ENCODE measurements at regions of chr10 and their contacts with region 1.

Region 1: DNA sequence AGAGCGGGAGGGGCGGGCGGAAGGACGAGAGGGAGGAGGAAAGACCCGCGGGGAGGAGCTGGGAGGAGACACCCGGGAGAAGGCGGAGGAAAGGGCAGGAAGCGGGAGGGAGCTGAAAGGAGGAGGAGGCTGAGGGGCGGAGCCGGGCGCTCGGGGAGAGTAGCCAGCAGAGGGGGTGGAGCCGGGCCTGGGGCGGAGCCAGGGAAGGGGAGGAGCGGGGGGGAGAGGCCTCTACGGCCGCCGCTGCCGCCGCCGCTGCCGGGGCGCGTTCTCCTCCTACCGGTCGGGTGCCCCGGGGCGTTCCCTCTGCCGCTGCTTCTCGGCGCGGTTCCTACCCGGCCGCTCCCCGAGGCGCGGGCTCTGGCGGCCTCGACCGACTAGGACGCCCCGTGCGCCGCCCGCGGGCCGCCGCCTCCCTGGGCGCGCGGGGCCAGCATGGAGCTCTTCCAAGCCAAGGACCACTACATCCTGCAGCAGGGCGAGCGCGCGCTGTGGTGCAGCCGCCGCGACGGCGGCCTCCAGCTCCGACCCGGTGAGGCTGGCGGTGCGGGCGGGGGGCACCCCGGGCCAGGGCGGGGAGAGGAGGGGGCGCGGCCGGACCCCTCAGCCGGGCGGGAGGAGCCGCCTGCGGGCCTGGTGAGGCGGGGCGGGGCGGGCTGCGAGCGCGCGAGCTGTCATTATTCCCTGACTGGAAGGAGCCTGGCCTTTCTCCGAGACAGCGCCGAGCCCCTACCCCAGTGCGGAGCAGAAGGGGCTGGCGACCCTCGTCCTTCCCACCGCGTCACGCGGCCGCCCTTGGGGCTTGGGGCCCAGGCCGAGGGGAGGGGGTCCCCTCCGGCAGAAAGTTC is at the start of gene INPP5F:
- DNase-seq: peak; percentile 99
- ATAC-seq: peak; percentile 93
- H3K4me3 Mint-ChIP-seq: peak within 1 kb of the TSS; percentile 83
- H3K27ac Mint-ChIP-seq: peak within 1 kb of the TSS; percentile 66
- H3K4me1 Mint-ChIP-seq: peaks cover 40% of the 10 kb centered on the region
- H3K27me3 Mint-ChIP-seq: no peaks in the 10 kb centered on the region
- total RNA-seq, gene INPP5F: 17.4 to 32.0 TPM

Region 2: DNA sequence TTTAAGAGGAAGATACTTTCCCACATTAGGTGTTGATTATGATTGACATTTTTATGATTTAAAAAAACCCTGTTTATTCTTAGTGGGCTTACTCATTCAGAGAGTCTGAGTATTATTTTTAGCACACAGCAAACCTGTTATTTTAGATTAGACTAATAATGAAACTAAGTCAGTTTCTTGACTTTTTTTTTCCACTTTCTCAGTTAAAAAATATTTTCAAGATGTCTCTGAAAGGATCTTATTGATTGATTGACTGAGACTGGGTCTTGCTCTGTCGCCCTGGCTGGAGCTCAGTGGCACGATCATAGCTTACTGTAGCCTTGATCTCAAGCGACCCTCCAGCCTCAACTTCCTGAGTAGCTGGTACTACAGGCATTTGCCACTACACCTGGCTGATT is 20.6 kb before region 1 on chr10:
- CTCF ChIA-PET with region 1: interaction called, 24 read pairs
- DNase-seq: no peak
- ATAC-seq: peak; percentile 63
- H3K4me3 Mint-ChIP-seq: peak overlapping the region; percentile 62
- H3K27ac Mint-ChIP-seq: peak overlapping the region; percentile 95
- H3K4me1 Mint-ChIP-seq: peaks cover 66% of the 10 kb centered on the region
- H3K27me3 Mint-ChIP-seq: no peaks in the 10 kb centered on the region

Region 3: GRCh38 chr10:119715628-119716505 is 10.2 kb before region 1 on chr10:
- CTCF ChIA-PET with region 1: interaction called, 14 read pairs
- DNase-seq: no peak
- ATAC-seq: no peak
- H3K4me3 Mint-ChIP-seq: no peak overlapping the region
- H3K27ac Mint-ChIP-seq: no peak overlapping the region
- H3K4me1 Mint-ChIP-seq: no peaks in the 10 kb centered on the region
- H3K27me3 Mint-ChIP-seq: no peaks in the 10 kb centered on the region

Region 4: GRCh38 chr10:119737827-119738226 is 11.8 kb after region 1 on chr10:
- CTCF ChIA-PET with region 1: interaction called, 10 read pairs
- DNase-seq: no peak
- ATAC-seq: no peak
- H3K4me3 Mint-ChIP-seq: no peak overlapping the region
- H3K27ac Mint-ChIP-seq: no peak overlapping the region
- H3K4me1 Mint-ChIP-seq: peaks cover 18% of the 10 kb centered on the region
- H3K27me3 Mint-ChIP-seq: no peaks in the 10 kb centered on the region

Region 5: DNA sequence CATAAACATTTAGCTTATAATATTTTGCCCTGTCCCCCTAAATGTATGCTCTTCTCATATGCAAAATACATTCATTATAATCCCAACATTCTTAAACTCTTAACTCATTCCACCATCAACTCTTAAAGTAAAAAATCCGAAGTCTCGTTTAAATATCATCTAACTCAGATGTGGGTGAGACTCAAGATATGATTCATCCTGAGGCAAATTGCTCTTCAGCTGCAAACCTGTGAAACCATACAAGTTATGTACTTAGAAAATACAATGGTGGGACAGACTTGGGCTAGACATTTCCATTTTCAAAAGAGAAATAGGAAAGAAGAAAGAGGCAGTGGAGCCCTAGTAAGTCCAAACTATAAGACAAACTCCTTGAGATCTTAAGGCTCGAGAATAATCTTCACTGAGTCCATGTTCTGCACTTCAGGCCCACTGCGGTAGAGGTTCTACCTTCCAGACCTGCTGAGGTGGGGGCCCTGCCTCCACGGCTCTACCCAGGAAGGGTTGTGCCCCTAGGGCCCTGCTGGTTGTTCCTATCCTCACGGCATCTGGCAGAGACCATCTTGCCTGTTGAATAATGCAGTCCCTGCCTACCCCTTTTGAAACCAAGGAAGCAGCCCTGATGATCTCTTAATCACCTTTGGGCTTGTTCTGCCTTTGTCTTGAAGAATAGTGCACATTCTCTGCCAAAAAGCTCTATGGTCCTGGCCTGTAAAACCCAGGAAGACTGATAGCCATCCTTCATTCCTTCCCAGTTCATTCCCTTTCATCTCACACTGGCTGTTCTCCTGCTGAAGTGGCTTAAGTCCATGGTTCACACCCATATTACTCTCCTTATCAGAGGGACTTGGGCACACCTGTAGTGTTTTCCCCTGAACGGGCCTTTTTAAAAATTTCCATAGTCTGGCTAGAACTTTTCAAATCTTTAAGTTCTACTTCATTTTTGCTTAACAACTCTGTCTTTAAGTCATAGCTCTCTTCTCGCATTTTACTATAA is 37.0 kb after region 1 on chr10:
- CTCF ChIA-PET with region 1: no interaction called
- DNase-seq: no peak
- ATAC-seq: peak; percentile 60
- H3K4me3 Mint-ChIP-seq: no peak overlapping the region
- H3K27ac Mint-ChIP-seq: peak overlapping the region; percentile 12
- H3K4me1 Mint-ChIP-seq: peaks cover 12% of the 10 kb centered on the region
- H3K27me3 Mint-ChIP-seq: no peaks in the 10 kb centered on the region